HCT116 (cell line): ENCODE measurements at regions of chr4 and their contacts with region 1.

Region 1: DNA sequence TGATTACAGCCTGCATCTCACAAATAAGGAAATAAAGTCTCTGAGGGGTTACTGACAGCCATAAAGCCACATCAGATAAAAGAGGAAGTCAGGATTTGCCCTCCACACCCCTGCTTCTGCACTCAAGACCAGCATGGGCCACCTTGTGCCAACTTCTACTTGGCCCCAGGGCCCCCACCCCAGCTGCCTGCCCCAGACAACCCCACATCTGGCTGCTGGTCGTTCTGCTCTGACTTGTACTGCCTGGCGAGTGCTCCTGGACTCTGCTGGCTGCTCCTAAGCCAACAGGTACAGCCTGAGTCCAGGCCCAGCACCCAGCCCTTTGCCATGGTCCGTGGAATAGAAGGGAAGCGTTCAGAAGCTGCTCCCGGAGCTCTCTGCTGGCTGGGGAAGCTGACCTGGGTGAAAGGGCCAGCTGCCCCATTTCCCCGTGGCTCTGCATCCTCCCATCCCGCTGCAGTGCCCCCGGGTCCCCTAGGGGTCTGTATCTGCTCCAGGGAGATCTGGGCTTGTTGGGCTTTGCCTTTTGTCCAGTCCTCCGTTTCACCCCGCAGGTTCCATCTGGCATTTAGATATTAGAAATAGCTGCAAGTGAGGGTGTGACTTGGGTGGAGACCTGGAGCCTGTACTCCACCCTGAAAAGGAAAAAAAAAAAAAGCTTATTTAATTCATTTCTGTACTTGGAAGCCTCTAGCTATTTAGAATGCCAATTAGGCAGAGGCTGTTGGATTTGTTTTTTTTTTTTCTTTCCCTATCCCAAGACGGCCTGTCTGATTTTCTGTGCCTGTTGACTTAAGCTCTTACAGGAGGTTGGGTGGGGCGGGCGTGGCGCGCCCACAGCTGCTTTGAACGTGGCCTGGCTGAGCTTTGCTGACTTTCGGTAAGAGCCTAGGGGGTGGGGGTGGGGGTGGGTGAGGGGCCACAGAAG is 194.7 kb downstream of the PTTG2 start:
- DNase-seq: no peak
- ATAC-seq: peak; percentile 70
- H3K4me3 ChIP-seq: no peak overlapping the region
- H3K27ac ChIP-seq: peak overlapping the region; percentile 46; the same call in 1 of the 2 replicates
- H3K4me1 ChIP-seq: peaks cover 18 to 33% of the 10 kb centered on the region in 2 experiments
- H3K27me3 ChIP-seq: no peaks in the 10 kb centered on the region
- CTCF ChIP-seq: no peak
- POLR2A ChIP-seq: no peak
- RAD21 ChIP-seq: no peak

Region 2: DNA sequence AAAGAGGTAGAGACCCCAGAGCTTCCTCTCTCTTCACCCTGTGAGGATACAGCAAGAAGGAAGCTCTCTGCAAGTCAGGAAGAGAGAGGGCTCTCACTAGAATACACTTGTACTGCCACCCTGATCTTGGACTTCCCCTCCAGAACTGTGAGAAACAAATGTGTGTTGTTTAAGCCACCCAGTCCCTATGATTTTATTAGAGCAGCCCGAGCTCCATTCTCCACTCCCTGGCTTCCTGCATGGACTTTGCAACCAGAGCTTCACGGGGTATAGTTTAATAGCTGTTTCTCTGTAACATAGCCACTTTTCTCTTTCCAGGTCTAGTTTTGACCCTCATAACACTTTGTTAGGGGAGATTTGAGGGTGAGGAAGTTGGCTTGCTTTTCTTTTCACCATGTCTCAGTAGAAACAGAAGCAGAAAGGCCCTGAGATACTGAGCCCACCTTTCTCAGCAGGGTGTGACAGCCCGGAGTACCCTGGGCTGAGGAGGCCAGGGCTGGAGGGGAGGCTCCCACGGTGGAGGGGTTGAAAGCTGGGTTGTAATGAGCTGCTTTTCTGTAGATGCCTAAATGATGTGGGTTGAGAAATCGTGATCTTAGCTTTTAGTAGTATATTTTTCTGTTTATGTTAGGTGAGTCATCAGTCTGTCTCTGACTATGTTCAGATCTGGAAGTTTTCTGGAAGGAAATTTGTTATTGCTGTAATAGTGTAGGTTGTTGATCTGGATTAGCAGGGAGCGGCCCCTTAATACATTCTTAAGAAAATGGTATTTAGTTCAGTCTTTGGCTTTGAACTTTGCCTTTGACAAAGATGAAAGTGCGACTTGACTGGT is 76.1 kb before region 1 on chr4:
- CTCF ChIA-PET with region 1: no interaction called
- POLR2A ChIA-PET with region 1: interaction called, 3 read pairs
- RAD21 ChIA-PET with region 1: no interaction called
- intact Hi-C with region 1: loop called (anchors 5 kb)
- DNase-seq: no peak
- ATAC-seq: peak; percentile 63; the same call in 1 of the 2 replicates
- H3K4me3 ChIP-seq: no peak overlapping the region
- H3K27ac ChIP-seq: peak overlapping the region; percentile 47
- H3K4me1 ChIP-seq: peaks cover 23 to 26% of the 10 kb centered on the region in 2 experiments
- H3K27me3 ChIP-seq: no peaks in the 10 kb centered on the region
- CTCF ChIP-seq: no peak
- POLR2A ChIP-seq: no peak
- RAD21 ChIP-seq: no peak